Endothelial cell of umbilical vein (primary cell): ENCODE measurements at regions of chr3 and their contacts with region 1.

Region 1: DNA sequence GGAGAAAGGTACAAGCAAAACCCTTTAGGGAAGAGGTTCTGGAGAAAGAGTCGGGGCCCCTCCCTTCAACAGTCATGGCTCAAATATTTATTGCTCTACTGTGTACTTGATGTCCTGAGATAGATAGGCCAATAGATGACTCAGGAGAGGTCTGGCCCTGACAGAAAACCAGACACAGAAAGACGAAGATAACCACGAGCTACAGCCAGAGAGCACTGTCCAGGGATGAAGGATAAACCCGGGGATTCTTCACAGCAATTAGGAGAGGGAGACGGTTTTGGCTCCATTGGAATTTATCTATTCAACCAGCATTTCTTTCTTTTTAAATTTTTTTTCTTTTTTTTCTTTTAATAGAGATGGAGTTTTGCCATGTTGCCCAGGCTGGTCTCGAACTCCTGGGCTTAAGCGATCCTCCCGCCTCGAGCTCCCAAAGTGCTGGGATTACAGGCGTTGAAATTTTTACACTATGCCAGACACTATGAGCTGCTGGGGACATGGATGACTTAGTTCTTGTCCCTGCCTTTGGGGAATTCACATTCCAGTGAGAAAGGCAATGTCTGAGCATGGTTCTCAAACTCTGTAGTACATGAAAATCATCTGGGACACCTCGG is 4.6 kb upstream of the CIDEC start:
- DNase-seq: no peak
- H3K4me3 ChIP-seq: no peak overlapping the region
- H3K27ac ChIP-seq: no peak overlapping the region
- H3K4me1 ChIP-seq: peaks cover 7% of the 10 kb centered on the region
- H3K27me3 ChIP-seq: no peaks in the 10 kb centered on the region
- CTCF ChIP-seq: no peak
- POLR2A ChIP-seq: no peak

Region 2: DNA sequence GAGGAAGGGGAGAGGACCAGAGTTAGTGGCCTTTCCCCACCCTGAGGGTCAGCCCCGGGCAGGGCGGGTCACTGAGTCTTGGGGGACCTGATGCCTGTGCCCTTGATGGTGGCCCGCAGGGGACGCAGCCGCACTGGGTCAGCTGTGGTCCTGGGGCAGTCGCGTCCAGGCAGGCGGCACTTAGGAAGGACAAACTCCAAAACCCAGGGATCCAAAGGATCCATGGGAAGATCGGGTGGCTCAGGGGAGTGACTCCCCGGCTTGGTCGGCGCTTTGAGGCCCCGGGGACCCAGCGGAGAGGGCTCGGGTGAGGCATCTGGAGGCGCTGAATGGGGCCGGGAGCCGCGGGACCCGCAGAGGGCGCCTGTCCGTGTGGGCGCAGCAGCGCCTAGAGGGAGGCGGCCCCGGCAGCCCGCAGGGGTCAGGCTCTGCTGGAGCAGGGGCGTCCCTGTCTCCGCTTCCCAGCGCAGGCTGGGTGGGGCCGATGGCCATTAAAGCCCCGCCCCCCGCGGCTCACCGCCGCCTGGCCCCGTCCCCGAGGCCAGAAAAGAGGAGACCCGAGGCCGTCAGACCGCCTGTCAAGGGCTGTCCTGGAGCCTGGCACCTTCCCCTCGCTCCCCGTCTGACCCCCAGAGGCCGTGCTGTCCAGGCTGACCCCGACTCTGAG is 22.1 kb before region 1 on chr3:
- CTCF ChIA-PET with region 1: interaction called, 7 read pairs
- POLR2A ChIA-PET with region 1: interaction called, 10 read pairs
- dilution Hi-C with region 1: no loop called
- intact Hi-C with region 1: no loop called
- DNase-seq: peak; percentile 29
- H3K4me3 ChIP-seq: peak overlapping the region in 1 of 3 experiments; percentile 27
- H3K27ac ChIP-seq: no peak overlapping the region
- H3K4me1 ChIP-seq: no peaks in the 10 kb centered on the region
- H3K27me3 ChIP-seq: no peaks in the 10 kb centered on the region
- CTCF ChIP-seq: peak; percentile 30 to 62
- POLR2A ChIP-seq: no peak